GM13976 (cell line): ENCODE measurements at regions of chr22 and their contacts with region 1.

Region 1: GRCh38 chr22:45577746-45578523 is 75.3 kb downstream of the FBLN1 start:
- DNase-seq: peak; percentile 87
- CTCF ChIP-seq: peak; percentile 96

Region 2: DNA sequence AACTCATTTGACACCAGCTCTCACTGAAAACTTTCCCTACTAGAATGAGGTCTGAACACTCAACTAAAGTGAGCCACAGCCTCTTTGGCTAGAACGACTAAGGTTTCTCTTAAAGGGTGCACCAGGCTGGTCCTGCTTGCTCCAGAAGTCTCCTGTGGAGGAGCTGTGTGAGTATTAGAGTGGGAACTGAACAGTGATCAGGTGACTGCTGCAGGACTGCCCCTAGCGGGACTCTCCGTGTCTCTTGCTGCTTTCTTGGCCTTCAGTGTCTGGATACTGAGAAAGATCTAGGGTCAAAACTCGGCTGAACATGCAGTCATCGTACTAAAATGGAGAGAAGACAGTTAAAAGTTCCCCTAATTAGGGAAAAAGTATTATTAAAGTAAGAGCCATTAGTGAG is 233.6 kb before region 1 on chr22:
- in situ Hi-C with region 1: no loop called
- DNase-seq: no peak
- CTCF ChIP-seq: no peak

Region 3: DNA sequence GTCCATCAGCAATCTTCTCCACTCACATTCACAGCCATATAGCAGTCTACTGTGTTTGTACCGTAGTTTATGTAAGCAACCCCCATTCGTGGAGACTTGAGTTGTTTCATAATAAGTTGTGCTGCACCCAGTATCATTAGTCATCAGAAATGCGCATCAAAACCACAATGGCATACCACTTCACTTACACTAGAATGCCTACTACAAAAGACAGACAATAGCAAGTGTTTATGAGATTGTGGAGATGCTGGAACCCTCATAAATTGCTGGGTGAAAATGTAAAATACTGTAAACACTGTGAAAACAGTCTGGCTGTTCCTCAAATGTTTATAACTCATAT is 227.0 kb after region 1 on chr22:
- in situ Hi-C with region 1: no loop called
- DNase-seq: no peak
- CTCF ChIP-seq: no peak

Region 4: DNA sequence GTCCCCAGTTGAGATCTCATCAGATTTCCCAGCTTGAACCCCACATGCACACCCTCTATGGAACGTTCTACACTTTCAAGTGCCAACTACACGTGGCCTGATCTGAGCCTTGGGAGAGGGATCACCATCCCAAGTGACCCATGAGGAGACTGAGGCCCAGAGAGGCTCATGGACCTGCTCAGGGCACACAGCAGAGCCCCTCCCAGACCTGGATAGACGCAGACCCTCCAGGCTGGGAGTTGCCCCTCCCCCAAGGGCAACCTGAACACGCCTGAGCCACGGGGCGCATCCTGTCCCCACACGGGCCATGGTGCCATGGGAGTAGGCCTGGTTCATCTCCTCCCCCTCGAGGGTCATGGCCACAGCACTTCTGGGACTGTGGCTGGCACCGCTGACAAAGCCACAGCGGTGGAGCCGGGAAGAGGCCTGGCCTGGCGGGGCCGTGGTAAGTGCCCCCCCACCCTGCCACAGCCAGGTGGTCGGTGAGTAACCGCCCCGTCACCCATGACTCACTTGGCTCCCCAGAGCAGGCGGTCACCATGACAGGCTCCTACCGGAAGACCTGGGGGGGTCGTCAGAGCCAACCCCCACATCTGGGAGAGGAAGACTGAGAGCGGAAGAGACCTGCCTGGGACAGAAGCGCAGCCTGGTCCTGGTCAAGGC is 390.9 kb after region 1 on chr22:
- in situ Hi-C with region 1: loop called (anchors 5 kb)
- DNase-seq: no peak
- CTCF ChIP-seq: no peak